HepG2 (cell line): ENCODE measurements at regions of chr4 and their contacts with region 1.

Region 1: DNA sequence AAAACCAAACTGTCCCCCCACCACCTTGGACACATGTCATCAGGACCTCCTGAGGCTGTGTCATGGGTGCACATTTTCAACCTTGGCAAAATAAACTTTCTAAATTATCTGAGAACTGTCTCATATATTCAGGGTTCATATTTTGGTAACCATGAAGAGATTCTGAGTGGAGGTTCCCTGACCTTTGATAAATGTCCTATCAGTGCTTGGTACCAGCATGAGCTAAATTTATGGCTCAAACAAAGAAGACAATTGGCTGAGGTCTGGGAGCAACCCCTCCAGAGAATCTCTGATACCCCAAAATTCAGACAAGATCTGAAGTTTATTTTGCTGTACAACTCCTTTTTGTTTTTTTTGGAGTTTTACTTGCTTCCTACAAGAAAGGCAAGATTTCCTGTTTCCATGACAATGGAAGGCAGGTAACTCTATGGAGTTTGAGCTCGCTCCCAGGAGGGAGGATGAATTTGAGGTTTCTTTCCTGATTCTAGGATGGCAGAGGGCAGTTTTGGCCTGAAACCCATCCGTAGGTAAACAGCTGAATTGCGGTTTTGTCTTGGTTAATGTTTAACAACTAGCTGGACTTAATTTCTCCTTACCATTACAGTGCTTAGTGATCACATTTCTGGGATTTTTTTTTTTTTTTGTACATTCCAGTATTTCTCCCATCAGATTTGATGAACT is 14.5 kb downstream of the UGT2B15 start:
- DNase-seq: peak; percentile 91
- ATAC-seq: peak; percentile 84
- H3K4me3 ChIP-seq: peak overlapping the region in 2 of 3 experiments; percentile 15 to 26; a peak in 2 of 6 replicates
- H3K27ac ChIP-seq: peak overlapping the region; percentile 95
- H3K4me1 ChIP-seq: peaks cover 53% of the 10 kb centered on the region
- H3K27me3 ChIP-seq: no peaks in the 10 kb centered on the region
- CTCF ChIP-seq: no peak
- EP300 ChIP-seq: peak in 1 of 2 experiments; percentile 72; a peak in 2 of 4 replicates
- POLR2A ChIP-seq: no peak
- RAD21 ChIP-seq: no peak

Region 2: DNA sequence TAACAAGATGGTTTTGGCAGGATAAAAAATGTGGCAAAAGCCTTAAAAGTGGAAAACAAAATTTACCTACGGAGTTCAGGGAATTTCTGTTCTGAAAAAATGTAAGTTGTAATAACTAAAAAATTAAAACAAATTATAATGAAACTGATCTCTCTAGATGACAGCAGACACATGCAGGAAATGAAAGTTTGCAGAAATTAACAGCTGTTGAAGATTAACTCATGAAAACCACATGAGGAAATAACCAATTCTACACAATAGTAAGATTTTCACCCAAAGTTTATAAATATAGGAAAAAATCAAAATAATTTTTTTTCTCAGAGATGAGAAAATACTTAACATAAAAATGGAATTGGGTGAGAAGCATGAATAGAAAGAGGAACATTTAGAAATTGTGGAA is 62.1 kb after region 1 on chr4:
- CTCF ChIA-PET with region 1: no interaction called
- POLR2A ChIA-PET with region 1: no interaction called
- in situ Hi-C with region 1: no loop called
- intact Hi-C with region 1: no loop called
- DNase-seq: no peak
- ATAC-seq: no peak
- H3K4me3 ChIP-seq: no peak overlapping the region
- H3K27ac ChIP-seq: no peak overlapping the region
- H3K4me1 ChIP-seq: no peaks in the 10 kb centered on the region
- H3K27me3 ChIP-seq: no peaks in the 10 kb centered on the region
- CTCF ChIP-seq: no peak
- EP300 ChIP-seq: no peak
- POLR2A ChIP-seq: no peak
- RAD21 ChIP-seq: no peak

Region 3: DNA sequence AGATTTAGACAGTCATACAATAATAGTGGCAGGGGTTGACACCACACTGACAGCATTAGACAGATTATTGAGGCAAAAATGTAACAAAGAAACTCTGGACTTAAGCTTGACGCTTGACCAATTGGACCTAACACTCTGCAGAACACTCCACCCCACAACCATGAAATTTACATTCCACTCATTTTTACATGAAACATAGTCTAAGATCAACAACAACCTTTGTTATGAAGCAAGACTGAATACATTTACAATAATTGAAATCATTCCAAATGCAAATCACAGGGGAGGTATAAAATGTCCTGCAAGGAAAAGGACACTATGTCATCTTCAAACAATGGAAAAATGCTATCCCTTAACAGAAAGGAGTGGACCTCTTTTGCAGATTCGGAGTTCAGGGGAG is 155.0 kb after region 1 on chr4:
- CTCF ChIA-PET with region 1: no interaction called
- POLR2A ChIA-PET with region 1: interaction called, 5 read pairs
- in situ Hi-C with region 1: no loop called
- intact Hi-C with region 1: loop called (anchors 10 kb)
- DNase-seq: peak; percentile 3
- ATAC-seq: no peak
- H3K4me3 ChIP-seq: no peak overlapping the region
- H3K27ac ChIP-seq: no peak overlapping the region
- H3K4me1 ChIP-seq: peaks cover 36% of the 10 kb centered on the region
- H3K27me3 ChIP-seq: no peaks in the 10 kb centered on the region
- CTCF ChIP-seq: no peak
- EP300 ChIP-seq: no peak
- POLR2A ChIP-seq: no peak
- RAD21 ChIP-seq: no peak

Region 4: GRCh38 chr4:68864438-68865187 is 208.7 kb after region 1 on chr4:
- CTCF ChIA-PET with region 1: no interaction called
- POLR2A ChIA-PET with region 1: interaction called, 4 read pairs
- in situ Hi-C with region 1: no loop called
- intact Hi-C with region 1: loop called (anchors 2 kb)
- DNase-seq: peak; percentile 92
- ATAC-seq: peak; percentile 96
- H3K4me3 ChIP-seq: peak overlapping the region in 2 of 3 experiments; percentile 35 to 51; a peak in 3 of 6 replicates
- H3K27ac ChIP-seq: peak overlapping the region; percentile 76
- H3K4me1 ChIP-seq: peaks cover 61% of the 10 kb centered on the region
- H3K27me3 ChIP-seq: no peaks in the 10 kb centered on the region
- CTCF ChIP-seq: 0 out of 2 replicates have a peak, but pooled peaks have one; percentile 10
- EP300 ChIP-seq: peak in 1 of 2 experiments; percentile 86; a peak in 2 of 4 replicates
- POLR2A ChIP-seq: no peak; a peak in 1 of 4 replicates
- RAD21 ChIP-seq: no peak

Region 5: DNA sequence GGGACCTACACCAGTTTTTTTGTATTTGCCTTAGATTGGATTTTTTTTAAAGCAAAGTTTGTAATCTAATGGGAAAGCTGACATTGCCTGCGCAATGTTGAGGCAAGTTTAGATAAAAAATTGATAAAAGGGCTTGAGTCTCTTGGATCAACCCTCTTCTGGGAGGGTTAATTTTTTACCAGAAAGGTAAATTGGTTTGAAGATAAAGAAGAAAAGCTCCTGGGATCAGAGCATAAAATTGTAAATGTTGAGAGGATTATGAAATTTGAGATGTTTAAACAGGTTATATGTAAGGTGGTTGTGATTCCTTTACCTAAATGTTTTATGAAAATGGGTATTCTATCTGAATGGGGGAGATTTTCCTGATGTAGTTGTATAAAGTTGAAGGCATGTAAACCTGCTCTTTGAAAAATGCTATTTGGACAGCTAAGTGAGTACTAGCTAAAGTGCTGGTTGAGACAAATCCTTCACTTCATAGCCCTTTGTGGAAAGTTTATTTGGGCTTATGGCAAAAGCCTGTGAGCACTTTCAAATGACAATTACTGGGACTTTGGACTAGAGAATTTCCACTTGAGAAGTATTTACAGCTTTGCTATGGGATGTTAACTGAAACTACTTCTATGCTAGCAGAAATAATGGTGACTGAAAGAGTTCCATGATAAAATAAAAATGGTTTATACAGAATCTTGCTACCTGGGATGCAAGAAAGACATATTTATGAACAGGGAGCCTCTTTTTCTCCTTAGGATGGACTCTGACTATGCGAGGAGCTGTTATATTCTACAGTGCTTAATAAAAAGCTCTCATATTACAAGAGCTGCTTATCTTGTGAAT is 216.1 kb after region 1 on chr4:
- CTCF ChIA-PET with region 1: no interaction called
- POLR2A ChIA-PET with region 1: interaction called, 7 read pairs
- in situ Hi-C with region 1: no loop called
- intact Hi-C with region 1: loop called (anchors 2 kb)
- DNase-seq: peak; percentile 91
- ATAC-seq: peak; percentile 92
- H3K4me3 ChIP-seq: peak overlapping the region in 2 of 3 experiments; percentile 47 to 55; a peak in 3 of 6 replicates
- H3K27ac ChIP-seq: peak overlapping the region; percentile 85
- H3K4me1 ChIP-seq: peaks cover 59% of the 10 kb centered on the region
- H3K27me3 ChIP-seq: no peaks in the 10 kb centered on the region
- CTCF ChIP-seq: no peak
- EP300 ChIP-seq: peak in 1 of 2 experiments; percentile 90; a peak in 2 of 4 replicates
- POLR2A ChIP-seq: no peak; a peak in 1 of 4 replicates
- RAD21 ChIP-seq: peak; percentile 11; the same call in 1 of the 2 replicates

Region 6: DNA sequence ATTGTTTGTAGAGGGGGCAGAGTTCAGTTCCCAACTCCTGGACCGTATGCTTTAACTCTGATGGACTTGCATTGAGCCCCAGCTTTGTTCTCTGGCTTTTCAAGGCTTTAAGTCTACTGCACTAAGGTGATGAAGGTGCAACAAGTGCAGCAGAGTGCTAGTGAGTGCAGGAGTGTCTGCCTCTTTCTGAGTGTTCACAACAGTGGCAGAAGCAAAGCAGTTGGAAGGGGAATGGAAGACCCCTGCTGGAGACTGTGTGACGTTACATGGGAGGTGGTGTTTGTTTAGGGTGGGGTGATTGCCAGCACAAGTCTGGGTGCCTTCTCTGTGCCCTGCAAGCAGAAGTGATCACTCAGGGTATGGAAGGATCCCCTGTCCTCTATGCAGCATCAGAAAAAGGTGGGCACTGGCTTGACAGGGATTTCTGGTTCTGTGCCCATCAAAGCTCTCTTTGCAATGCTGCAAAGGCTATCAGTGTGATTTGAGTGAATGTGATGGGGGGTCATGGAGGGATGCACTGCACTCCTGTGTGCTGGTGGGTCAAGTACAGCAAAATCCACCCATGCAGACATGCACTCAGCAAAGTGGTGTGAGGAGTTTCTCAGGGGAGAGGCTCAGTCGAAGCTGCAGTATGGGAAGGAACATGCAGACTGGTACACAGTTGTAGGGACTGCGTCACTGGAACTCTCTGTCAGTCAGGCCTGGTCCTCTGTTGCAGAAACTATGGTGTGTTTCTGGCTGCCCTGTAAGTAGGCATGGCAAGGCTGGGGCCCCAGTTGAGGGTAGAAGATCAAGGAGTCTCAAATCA is 369.5 kb after region 1 on chr4:
- CTCF ChIA-PET with region 1: no interaction called
- POLR2A ChIA-PET with region 1: no interaction called
- in situ Hi-C with region 1: no loop called
- intact Hi-C with region 1: loop called (anchors 10 kb)
- DNase-seq: peak; percentile 68
- ATAC-seq: peak; percentile 94
- H3K4me3 ChIP-seq: no peak overlapping the region
- H3K27ac ChIP-seq: peak overlapping the region; percentile 45
- H3K4me1 ChIP-seq: peaks cover 65% of the 10 kb centered on the region
- H3K27me3 ChIP-seq: no peaks in the 10 kb centered on the region
- CTCF ChIP-seq: peak; percentile 81
- EP300 ChIP-seq: peak in 1 of 2 experiments; percentile 1; a peak in 1 of 4 replicates
- POLR2A ChIP-seq: no peak
- RAD21 ChIP-seq: peak; percentile 76